CD8-positive, alpha-beta T cell (primary cell): ENCODE measurements at regions of chrX and their contacts with region 1.

Region 1: GRCh38 chrX:12946838-12947544 is 27.9 kb upstream of the TMSB4X start:
- DNase-seq: peak; percentile 45 to 87 (median 75)
- ATAC-seq: peak; percentile 28
- H3K4me3 ChIP-seq: no peak overlapping the region
- H3K4me3 Mint-ChIP-seq: peak overlapping the region; percentile 60
- H3K27ac ChIP-seq: peak overlapping the region; percentile 17 to 94
- H3K27ac Mint-ChIP-seq: peak overlapping the region; percentile 98
- H3K4me1 ChIP-seq: peaks cover 44% of the 10 kb centered on the region
- H3K4me1 Mint-ChIP-seq: peaks cover 58% of the 10 kb centered on the region
- H3K27me3 ChIP-seq: no peaks in the 10 kb centered on the region
- H3K27me3 Mint-ChIP-seq: no peaks in the 10 kb centered on the region
- CTCF ChIP-seq: peak; percentile 77

Region 2: DNA sequence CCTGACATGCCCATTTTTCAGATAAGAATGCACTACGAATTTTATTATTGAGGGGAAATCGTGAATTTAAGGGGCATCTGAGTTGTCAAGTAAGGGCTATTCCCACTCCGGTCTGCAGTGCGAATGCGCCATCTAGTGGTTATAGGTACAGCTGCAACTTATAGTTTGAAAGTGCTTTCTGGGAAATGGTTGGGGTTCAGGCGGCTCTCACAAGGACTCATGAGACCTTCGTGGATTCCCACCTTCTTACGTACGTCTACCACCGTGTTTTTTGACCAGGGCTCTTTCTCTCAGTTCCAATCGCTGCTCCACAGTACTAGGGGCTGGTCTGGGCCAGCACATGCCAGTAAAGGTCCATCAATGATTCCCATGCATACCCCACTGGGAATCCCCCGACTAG is 1176.7 kb before region 1 on chrX:
- CTCF ChIA-PET with region 1: no interaction called
- POLR2A ChIA-PET with region 1: no interaction called
- intact Hi-C with region 1: no loop called
- DNase-seq: peak in 7 of 9 experiments; percentile 24 to 83 (median 53)
- ATAC-seq: peak; percentile 60
- H3K4me3 ChIP-seq: no peak overlapping the region
- H3K4me3 Mint-ChIP-seq: no peak overlapping the region
- H3K27ac ChIP-seq: peak overlapping the region in 1 of 2 experiments; percentile 40
- H3K27ac Mint-ChIP-seq: peak overlapping the region; percentile 84
- H3K4me1 ChIP-seq: peaks cover 31% of the 10 kb centered on the region
- H3K4me1 Mint-ChIP-seq: peaks cover 40% of the 10 kb centered on the region
- H3K27me3 ChIP-seq: no peaks in the 10 kb centered on the region
- H3K27me3 Mint-ChIP-seq: no peaks in the 10 kb centered on the region
- CTCF ChIP-seq: peak; percentile 65

Region 3: DNA sequence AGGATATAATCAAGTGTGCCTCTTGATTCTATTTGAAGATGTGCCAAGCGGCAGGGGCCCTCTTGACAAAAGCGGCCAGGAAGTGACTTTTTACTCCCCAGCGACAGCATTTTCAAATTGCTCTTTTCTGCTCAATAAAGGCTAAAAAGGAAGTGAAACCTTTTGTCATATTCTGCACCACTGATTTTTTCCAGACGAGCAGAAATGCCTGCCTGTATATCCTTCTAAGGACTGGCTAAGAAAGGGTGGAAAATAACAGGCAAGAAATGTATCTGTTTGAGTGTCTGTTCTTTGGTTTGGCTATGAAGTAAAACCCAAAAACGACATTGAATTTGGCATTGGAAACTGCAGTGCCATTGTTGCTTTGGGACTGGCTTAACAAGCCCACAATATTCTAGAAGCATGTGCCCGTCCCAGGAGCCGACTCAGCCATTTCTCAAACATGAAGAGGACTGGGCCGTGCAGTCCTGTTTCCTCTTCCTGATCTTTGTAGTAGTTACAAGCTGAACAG is 53.4 kb after region 1 on chrX:
- CTCF ChIA-PET with region 1: interaction called, 11 read pairs
- POLR2A ChIA-PET with region 1: interaction called, 12 read pairs
- intact Hi-C with region 1: no loop called
- DNase-seq: peak in 6 of 9 experiments; percentile 31 to 73 (median 54)
- ATAC-seq: peak; percentile 55
- H3K4me3 ChIP-seq: peak overlapping the region; percentile 16 to 40
- H3K4me3 Mint-ChIP-seq: peak overlapping the region; percentile 82
- H3K27ac ChIP-seq: peak overlapping the region; percentile 65 to 84
- H3K27ac Mint-ChIP-seq: peak overlapping the region; percentile 96
- H3K4me1 ChIP-seq: peaks cover 68% of the 10 kb centered on the region
- H3K4me1 Mint-ChIP-seq: peaks cover 79% of the 10 kb centered on the region
- H3K27me3 ChIP-seq: no peaks in the 10 kb centered on the region
- H3K27me3 Mint-ChIP-seq: no peaks in the 10 kb centered on the region
- CTCF ChIP-seq: no peak

Region 4: GRCh38 chrX:13051529-13052172 is 104.7 kb after region 1 on chrX:
- CTCF ChIA-PET with region 1: interaction called, 14 read pairs
- POLR2A ChIA-PET with region 1: interaction called, 7 read pairs
- intact Hi-C with region 1: no loop called
- DNase-seq: peak in 8 of 9 experiments; percentile 17 to 80 (median 54)
- ATAC-seq: peak; percentile 81
- H3K4me3 ChIP-seq: no peak overlapping the region
- H3K4me3 Mint-ChIP-seq: peak overlapping the region; percentile 50
- H3K27ac ChIP-seq: peak overlapping the region; percentile 39 to 74
- H3K27ac Mint-ChIP-seq: peak overlapping the region; percentile 95
- H3K4me1 ChIP-seq: peaks cover 79% of the 10 kb centered on the region
- H3K4me1 Mint-ChIP-seq: peaks cover 72% of the 10 kb centered on the region
- H3K27me3 ChIP-seq: no peaks in the 10 kb centered on the region
- H3K27me3 Mint-ChIP-seq: no peaks in the 10 kb centered on the region
- CTCF ChIP-seq: no peak

Region 5: GRCh38 chrX:13341491-13342101 is 394.6 kb after region 1 on chrX:
- CTCF ChIA-PET with region 1: interaction called, 3 read pairs
- POLR2A ChIA-PET with region 1: no interaction called
- intact Hi-C with region 1: loop called in 1 of 2 experiments (anchors 5 kb)
- DNase-seq: peak in 2 of 9 experiments; percentile 5 to 7
- ATAC-seq: no peak
- H3K4me3 ChIP-seq: no peak overlapping the region
- H3K4me3 Mint-ChIP-seq: no peak overlapping the region
- H3K27ac ChIP-seq: no peak overlapping the region
- H3K27ac Mint-ChIP-seq: no peak overlapping the region
- H3K4me1 ChIP-seq: no peaks in the 10 kb centered on the region
- H3K4me1 Mint-ChIP-seq: no peaks in the 10 kb centered on the region
- H3K27me3 ChIP-seq: no peaks in the 10 kb centered on the region
- H3K27me3 Mint-ChIP-seq: no peaks in the 10 kb centered on the region
- CTCF ChIP-seq: no peak

Region 6: DNA sequence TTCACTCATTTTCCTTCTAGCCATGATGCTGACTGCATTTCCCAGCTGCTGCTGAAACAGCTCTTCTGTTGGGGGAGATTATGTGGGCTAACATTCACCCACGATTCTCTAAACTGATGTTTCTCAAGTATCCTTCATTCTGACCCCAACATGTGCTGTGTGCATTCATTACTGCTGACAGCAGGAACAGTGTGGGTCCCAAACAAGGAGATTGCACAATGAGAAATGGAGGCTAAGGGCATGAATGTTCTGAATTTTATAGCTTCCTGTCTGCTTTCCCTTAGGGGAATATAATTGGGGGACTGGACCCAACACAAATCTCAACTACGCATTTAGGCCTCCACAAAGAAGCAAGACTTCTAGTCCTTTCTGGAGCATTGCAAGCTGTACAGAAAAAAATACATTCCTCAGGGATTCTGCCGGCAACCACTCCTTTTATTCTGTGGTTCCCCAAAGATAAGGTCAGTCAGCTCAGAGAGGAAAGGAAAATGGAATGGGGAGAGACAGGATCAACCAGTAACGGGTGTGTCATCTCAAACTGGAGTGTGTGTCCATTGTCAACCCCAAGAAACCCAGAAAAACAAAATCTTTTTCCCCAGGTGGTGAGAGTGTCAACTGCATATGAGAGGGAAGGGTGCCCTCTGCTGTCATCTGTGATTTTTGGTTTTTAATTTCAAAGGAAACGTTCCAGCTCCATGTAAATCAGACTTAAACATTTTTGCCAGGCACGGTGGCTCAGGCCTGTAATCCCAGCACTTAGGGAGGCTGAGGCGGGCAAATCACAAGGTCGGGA is 540.9 kb after region 1 on chrX:
- CTCF ChIA-PET with region 1: interaction called, 160 read pairs
- POLR2A ChIA-PET with region 1: interaction called, 6 read pairs
- intact Hi-C with region 1: loop called (anchors 1 kb)
- DNase-seq: peak in 8 of 9 experiments; percentile 8 to 75 (median 44)
- ATAC-seq: peak; percentile 78
- H3K4me3 ChIP-seq: no peak overlapping the region
- H3K4me3 Mint-ChIP-seq: no peak overlapping the region
- H3K27ac ChIP-seq: peak overlapping the region in 1 of 2 experiments; percentile 43
- H3K27ac Mint-ChIP-seq: peak overlapping the region; percentile 84
- H3K4me1 ChIP-seq: peaks cover 20% of the 10 kb centered on the region
- H3K4me1 Mint-ChIP-seq: peaks cover 42% of the 10 kb centered on the region
- H3K27me3 ChIP-seq: no peaks in the 10 kb centered on the region
- H3K27me3 Mint-ChIP-seq: no peaks in the 10 kb centered on the region
- CTCF ChIP-seq: peak; percentile 56